GM10248 (cell line): ENCODE measurements at regions of chr11 and their contacts with region 1.

Region 1: DNA sequence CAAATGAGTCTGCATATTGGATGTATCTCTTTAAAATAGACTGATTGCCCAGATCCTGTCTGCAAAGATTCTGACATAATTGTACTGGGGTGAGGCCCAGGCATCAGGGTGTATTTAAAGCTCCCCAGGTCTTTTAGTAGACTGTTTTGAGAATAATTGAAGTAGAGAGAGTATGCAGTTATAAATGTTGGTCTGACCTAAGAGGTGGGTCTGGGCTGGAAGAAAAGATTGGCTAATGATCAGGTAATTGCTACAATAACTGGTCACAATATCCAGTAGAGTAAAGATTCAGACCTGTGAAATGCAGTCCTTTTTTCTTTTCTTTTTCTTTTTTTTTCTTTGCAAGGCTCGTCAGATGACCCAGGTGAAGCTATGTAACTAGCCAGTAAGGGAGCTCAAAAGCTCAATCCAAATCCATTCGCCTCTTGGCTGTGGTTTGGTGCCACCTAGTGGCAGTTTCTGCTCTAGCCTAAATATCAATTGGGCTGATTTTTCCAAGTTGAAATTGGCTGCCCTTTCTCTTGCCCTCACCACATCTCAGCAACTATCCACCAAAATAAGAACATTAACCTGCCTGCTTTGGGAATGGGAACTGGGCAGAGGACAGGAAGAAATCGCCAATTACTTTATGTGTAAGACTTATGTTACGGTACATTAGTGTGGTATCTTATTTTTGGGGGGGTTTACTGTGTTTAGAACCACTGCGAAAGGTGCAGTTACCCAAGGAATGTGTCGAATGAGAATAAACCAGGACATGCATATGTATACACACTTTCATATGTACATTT is 45.9 kb downstream of the ZNF143 start:
- DNase-seq: peak; percentile 70
- CTCF ChIP-seq: peak; percentile 80

Region 2: GRCh38 chr11:9170450-9170849 is 336.2 kb before region 1 on chr11:
- CTCF ChIA-PET with region 1: interaction called, 50 read pairs
- POLR2A ChIA-PET with region 1: no interaction called
- DNase-seq: no peak
- CTCF ChIP-seq: no peak

Region 3: DNA sequence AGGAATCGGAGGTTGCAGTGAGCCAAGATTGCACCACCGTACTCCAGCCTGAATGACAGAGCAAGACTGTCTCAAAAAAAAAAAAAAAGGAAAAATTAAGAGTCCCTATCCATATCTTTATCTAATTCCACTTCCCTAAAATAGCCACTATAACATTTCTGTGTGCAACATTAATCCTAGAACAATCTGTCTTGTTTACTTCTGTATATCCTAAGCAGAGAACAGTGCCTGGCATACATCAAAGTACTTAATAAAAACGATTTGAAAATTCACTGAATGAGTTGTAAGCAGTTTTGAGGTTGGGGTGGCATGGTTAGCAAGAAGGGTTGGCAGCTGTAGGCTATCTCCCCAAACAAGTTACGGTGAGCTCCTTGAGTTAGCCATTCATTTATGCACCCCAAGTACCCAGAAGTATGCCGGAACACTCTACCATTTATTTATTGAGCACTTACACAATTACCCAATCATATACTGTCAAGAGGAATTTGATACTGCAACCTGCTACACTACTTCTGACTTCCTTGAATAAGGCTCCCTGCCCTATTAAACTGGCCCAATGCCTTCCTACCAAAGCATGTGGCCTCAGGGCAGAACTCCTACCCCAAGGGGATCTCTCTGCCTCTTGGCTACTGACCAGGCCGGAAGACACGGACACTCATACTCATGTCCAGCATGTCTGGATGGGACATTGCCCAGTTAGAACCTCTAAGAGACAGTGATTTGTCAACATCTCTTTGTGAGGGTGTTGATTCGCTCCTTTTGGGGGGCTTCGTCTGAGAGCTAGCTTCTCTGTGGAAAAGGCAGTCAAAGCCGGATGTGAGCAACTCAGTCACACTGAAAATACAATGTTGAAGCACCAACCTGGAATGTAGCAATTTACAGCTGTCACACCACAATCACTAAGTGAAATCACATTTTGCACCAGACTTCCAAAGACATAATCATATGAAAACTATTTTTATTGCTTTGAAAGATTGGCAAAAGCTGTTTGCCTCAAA is 176.0 kb before region 1 on chr11:
- CTCF ChIA-PET with region 1: no interaction called
- POLR2A ChIA-PET with region 1: no interaction called
- DNase-seq: no peak
- CTCF ChIP-seq: no peak

Region 4: GRCh38 chr11:9357041-9357440 is 149.6 kb before region 1 on chr11:
- CTCF ChIA-PET with region 1: no interaction called
- POLR2A ChIA-PET with region 1: no interaction called
- DNase-seq: no peak
- CTCF ChIP-seq: no peak

Region 5: DNA sequence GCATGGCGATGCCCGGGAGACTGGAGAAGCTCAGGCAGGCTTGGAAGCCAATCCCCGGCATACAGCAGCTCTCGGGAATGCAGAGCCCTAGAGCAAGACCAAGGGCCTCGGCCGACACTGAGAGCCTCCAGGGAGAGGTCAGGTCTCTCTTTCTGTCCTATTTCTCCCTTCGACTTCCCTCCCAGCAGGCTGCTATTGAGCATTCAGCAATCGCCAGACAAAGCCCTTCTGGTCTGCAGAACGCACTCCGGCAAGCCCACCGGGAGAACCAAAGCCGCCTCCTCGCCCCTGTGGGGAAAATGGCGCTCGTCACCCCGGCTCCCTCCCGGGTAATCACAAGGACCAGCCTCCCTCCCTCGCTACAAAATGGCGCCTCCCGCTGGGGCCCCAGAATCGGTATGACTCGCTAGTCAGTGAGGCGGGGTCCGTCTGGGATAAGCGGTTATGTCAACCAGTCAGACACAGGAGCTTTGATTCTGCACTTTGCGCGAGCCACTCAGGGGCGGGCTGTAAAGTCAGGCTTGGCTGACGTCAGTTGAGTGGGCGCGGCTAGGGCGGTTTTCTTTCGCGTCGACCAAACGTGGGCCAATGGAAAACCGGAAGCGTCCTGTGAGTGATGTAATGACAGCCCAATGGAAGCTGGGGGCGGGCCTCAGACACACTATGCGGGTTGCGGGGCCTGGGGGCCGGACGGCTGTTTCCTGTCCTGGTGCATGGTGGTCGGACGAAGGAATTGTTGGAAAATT is 46.2 kb before region 1 on chr11 and contains the start of gene ZNF143:
- CTCF ChIA-PET with region 1: interaction called, 10 read pairs
- POLR2A ChIA-PET with region 1: interaction called, 5 read pairs
- DNase-seq: peak; percentile 95
- CTCF ChIP-seq: peak; percentile 45

Region 6: DNA sequence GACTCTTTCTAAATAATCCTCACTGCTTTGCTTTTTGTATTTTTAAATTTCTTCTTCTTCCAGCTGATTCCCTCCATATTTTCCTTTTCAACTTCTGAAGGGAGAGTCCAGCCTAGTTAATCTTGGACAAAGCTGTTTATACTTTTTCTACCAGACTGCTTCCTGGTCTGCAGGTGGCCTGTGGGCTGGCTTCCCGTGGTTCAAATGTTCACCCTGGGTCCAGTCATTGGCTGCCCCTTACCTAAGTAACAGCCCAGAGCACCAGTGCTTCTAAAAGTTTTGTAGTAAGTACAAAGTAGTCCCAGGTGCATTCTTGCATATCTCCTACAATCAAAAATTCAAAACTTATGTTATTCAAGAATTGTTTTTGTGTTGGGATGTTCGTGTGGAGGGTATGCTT is 26.8 kb before region 1 on chr11:
- CTCF ChIA-PET with region 1: interaction called, 14 read pairs
- POLR2A ChIA-PET with region 1: no interaction called
- DNase-seq: no peak
- CTCF ChIP-seq: no peak

Region 7: GRCh38 chr11:9524001-9524400 is 17.3 kb after region 1 on chr11:
- CTCF ChIA-PET with region 1: interaction called, 12 read pairs
- POLR2A ChIA-PET with region 1: no interaction called
- DNase-seq: no peak
- CTCF ChIP-seq: no peak

Region 8: DNA sequence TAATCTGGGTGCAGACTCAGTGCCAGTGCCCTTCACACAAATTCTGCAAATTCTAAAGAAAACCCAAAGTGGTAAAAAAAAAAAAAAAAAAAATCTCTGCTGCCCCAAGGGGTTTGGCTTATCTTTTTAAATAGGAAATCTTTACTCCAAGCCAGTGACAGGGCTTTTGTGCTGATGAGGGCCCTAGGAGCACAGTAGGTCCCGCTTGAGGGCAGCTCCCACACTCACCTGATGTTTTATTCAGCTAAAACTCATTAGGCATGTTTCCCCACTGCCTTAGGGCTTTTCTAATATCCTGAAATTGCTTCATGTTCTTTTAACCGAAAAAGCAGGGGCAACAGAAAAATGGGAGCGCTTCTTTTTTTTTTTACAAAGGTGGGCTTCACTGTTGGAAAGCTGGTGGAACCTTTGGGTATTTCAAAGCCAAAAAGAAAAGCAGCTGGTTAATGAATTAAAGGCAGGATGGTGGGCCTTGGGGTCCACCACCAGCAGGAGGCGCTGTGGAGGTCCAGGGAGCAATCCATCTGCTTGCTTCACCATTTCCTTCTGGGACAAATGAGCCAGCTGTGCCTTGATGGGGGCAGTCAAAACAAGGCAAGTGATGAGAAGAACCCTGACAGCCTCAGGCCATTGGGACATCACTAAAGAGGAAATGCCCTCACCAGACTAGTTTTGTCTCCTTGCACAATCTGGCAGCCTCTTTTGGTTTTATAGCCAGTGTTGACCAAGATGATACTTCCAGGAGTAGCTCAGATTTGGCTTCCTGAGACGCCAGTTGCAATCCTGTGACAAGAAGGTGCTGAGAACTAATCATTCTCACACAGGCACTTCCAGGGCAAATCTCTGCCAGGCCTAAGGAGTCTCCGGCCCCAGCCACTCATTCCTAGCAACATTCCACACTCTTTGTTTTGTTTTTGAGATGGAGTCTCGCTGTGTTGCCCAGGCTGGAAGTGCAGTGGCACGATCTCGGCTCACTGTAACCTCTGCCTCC is 28.4 kb after region 1 on chr11:
- CTCF ChIA-PET with region 1: interaction called, 17 read pairs
- POLR2A ChIA-PET with region 1: no interaction called
- DNase-seq: peak; percentile 78
- CTCF ChIP-seq: peak; percentile 79

Region 9: GRCh38 chr11:10181811-10182210 is 675.1 kb after region 1 on chr11:
- CTCF ChIA-PET with region 1: no interaction called
- POLR2A ChIA-PET with region 1: no interaction called
- DNase-seq: peak; percentile 9
- CTCF ChIP-seq: no peak